ENCODE measurements at regions of chr13 and their contacts with region 1.

Region 1: GRCh38 chr13:23469951-23470421 is 36.5 kb upstream of the SACS start:
- DNase-seq: peak; percentile 86
- H3K4me3 ChIP-seq: no peak overlapping the region
- H3K27ac ChIP-seq: peak overlapping the region; percentile 16
- H3K27me3 ChIP-seq: no peaks in the 10 kb centered on the region
- CTCF ChIP-seq: no peak

Region 2: DNA sequence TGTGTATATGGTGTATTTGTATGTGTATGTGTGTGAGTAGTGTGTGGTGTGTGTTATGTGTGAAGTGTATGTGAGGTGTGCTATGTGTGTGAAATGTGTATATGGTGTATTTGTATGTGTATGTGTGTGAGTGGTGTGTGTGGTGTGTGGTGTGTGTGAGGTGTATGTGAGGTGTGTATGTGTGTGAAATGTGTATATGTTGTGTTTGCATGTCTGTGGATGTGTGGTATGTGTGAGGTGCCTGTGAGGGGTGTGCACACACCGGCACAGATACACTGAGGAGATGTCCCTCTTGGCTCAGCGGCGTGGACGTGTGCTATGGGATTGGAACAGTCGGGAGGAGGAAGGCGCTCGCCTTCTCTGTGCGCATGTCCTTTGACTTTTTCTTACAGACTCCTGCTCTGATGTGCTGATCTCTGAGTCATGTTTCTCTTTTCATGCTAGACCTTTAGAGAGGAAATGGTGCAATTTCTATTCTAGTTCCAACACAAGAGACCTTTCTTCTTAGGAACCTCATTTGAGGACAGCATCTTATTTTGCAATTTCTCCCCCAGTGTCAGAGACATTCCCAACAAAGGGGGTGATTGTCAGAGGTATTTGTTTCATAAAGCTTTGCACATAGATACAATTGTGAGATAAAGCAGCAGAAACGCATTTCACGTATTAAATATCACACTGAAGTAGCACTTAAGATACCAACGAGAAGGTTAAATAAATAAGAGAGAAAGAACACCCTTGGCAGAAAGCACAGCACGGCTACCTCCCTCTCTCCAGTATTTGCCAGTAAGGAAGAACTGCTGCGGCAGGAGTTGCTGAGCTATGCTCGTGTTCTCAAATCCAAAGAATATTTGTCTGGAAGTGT is 88.9 kb after region 1 on chr13:
- in situ Hi-C with region 1: loop called (anchors 10 kb)
- DNase-seq: peak; percentile 83
- H3K4me3 ChIP-seq: peak overlapping the region; percentile 6
- H3K27ac ChIP-seq: peak overlapping the region; percentile 77
- H3K27me3 ChIP-seq: no peaks in the 10 kb centered on the region
- CTCF ChIP-seq: no peak